SK-N-SH (cell line): ENCODE measurements at regions of chr19 and their contacts with region 1.

Region 1: GRCh38 chr19:41310033-41310758 is at the start of gene CCDC97:
- DNase-seq: peak; percentile 94
- H3K4me3 ChIP-seq: peak within 1 kb of the TSS; percentile 69 to 80
- H3K27ac ChIP-seq: peak within 1 kb of the TSS; percentile 95
- H3K4me1 ChIP-seq: peaks cover 14 to 19% of the 10 kb centered on the region in 2 experiments; a peak in 3 of 4 replicates
- H3K27me3 ChIP-seq: no peaks in the 10 kb centered on the region
- CTCF ChIP-seq: no peak
- EP300 ChIP-seq: peak in 1 of 2 experiments; percentile 49; a peak in 1 of 4 replicates
- RAD21 ChIP-seq: no peak
- polyA plus RNA-seq, gene CCDC97: 8.7 and 9.6 TPM in 2 replicates

Region 2: GRCh38 chr19:41263850-41264580 is 46.2 kb before region 1 on chr19 and contains the start of gene HNRNPUL1:
- CTCF ChIA-PET with region 1: interaction called, 18 read pairs
- POLR2A ChIA-PET with region 1: interaction called, 6 read pairs
- DNase-seq: peak; percentile 98
- H3K4me3 ChIP-seq: peak within 1 kb of the TSS; percentile 83 to 86
- H3K27ac ChIP-seq: peak within 1 kb of the TSS; percentile 95 to 96
- H3K4me1 ChIP-seq: peaks cover 11 to 12% of the 10 kb centered on the region in 2 experiments; a peak in 2 of 4 replicates
- H3K27me3 ChIP-seq: no peaks in the 10 kb centered on the region
- CTCF ChIP-seq: peak; percentile 40
- EP300 ChIP-seq: peak; percentile 15 to 21; a peak in 2 of 4 replicates
- RAD21 ChIP-seq: no peak
- polyA plus RNA-seq, gene HNRNPUL1: 34.2 and 41.5 TPM in 2 replicates

Region 3: DNA sequence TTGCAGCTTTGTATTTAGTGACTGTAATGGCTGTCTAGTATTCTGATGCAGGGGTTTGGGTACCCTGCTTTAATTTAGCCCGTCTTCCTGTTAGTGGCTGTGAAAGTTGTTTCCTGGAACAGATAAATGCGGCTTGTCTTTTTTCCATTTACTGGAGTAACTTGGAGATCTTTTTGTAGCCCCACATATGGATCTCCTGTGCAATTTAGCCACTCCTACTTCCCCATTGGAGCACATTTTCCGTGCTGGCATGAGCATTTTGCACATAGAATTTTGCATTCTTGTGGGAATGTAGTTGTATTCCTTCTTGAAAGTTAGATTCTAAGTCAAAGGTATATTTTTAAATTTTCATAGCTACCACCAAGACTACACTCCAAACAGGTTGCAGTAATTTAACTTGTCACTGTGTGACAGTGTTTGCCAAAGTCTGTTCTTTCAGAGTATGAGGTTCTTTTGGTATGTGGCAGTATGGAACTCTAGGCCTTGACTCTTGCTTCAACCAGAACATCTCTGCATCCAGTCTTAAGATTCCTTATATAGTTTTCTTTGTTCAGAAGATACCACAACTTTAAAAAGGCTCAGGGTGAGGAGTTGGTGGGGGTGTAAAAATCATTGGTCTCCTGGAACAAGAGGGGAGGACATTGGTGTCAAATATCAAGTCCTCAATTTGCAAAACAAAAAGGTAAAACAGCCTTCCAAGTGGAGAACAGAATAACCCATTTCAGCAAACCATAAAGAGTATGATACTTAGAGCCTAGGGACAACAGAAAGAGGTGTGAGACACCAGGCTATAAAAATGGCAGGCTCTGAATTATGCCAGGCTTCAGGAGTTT is 21.3 kb before region 1 on chr19:
- CTCF ChIA-PET with region 1: interaction called, 105 read pairs
- POLR2A ChIA-PET with region 1: no interaction called
- DNase-seq: no peak
- H3K4me3 ChIP-seq: no peak overlapping the region
- H3K27ac ChIP-seq: no peak overlapping the region
- H3K4me1 ChIP-seq: no peaks in the 10 kb centered on the region
- H3K27me3 ChIP-seq: no peaks in the 10 kb centered on the region
- CTCF ChIP-seq: no peak
- EP300 ChIP-seq: no peak
- RAD21 ChIP-seq: no peak

Region 4: DNA sequence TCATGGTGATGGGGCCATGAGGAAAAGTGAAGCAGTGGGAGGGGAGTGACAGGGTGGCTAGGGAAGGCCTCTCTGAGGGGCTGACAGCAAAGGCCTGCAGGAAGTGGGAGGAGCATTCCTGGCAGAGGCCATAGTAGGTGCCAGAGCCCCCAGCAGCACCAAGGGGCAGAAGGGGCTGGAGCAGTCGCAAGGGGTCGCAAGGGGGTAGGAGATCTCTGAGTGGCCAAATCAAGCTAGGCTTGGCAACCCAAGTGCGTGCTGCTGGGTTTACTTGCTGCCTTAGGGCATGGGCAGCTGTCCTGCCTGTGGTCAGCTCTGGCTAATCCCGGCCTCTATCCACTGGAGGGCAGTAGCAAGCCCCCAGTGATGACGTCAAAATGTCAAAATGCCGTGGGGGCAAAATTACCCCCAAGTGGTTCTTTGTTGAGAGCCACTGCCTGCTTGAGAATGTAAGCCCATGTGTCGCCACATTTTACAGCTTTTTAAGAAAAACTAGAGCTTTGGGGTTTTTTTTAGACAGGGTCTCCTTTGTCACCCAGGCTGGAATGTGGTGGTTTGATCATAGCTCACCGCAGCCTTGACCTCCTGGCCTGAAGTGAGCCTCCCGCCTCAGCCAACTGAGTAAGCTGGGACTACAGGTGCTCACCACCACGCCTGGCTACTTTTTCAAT is 11.5 kb after region 1 on chr19:
- CTCF ChIA-PET with region 1: interaction called, 54 read pairs
- POLR2A ChIA-PET with region 1: interaction called, 5 read pairs
- DNase-seq: peak; percentile 90
- H3K4me3 ChIP-seq: no peak overlapping the region; a peak in 1 of 4 replicates
- H3K27ac ChIP-seq: peak overlapping the region; percentile 44 to 100
- H3K4me1 ChIP-seq: peaks cover 46 to 53% of the 10 kb centered on the region in 2 experiments
- H3K27me3 ChIP-seq: no peaks in the 10 kb centered on the region
- CTCF ChIP-seq: peak; percentile 80
- EP300 ChIP-seq: no peak
- RAD21 ChIP-seq: peak; percentile 53

Region 5: DNA sequence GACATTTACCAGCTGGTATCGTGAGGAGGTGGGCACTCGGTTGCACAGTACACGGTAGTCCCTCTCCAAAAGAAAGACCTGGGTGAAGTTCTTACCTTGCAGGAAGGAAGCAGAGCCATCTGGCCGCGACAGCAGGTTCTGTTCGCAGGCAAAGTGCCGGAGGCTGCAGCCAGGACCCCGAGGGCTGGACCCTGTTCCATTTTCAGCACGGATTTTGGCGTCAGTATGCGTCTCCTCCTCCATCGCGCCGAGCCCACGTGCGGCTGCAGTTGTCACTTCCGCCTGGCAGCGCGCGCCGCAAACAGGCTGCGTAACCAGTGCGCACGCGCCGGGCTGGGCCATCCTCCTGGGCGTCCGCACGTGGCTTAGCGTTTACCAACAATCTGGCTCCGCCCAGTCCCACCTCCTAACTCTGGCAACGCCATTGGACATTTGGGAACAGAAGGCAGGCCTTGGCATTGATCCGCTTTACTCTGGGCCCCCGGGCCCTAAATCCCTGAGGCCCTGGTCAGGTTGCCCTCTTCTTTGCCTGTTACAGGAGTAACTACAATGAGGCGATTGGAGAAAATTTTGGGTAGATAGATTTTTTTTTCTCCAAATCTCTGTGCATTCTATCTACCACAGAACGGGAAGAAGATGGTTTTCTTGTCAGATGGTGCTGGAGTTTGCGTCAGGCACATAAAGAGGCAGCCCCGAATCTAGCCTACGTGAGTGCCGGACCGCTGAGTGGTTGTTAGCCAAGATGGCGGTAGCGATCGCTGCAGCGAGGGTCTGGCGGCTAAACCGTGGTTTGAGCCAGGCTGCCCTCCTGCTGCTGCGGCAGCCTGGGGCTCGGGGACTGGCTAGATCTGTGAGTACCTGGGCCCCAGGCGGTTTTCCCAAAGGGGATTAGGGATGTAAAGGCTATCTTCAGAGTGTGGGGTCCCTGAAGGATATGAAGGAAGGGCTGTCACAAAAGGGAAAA is 87.2 kb after region 1 on chr19 and contains the starts of genes BCKDHA and EXOSC5:
- CTCF ChIA-PET with region 1: no interaction called
- POLR2A ChIA-PET with region 1: no interaction called
- DNase-seq: peak; percentile 97
- H3K4me3 ChIP-seq: peak within 1 kb of the TSS; percentile 79 to 93
- H3K27ac ChIP-seq: peak within 1 kb of the TSS; percentile 86 to 90
- H3K4me1 ChIP-seq: peaks cover 5 to 14% of the 10 kb centered on the region in 2 experiments; a peak in 2 of 4 replicates
- H3K27me3 ChIP-seq: no peaks in the 10 kb centered on the region
- CTCF ChIP-seq: no peak
- EP300 ChIP-seq: no peak
- RAD21 ChIP-seq: no peak
- polyA plus RNA-seq, gene BCKDHA: 16.3 and 30.9 TPM in 2 replicates
- polyA plus RNA-seq, gene EXOSC5: 71.3 and 74.1 TPM in 2 replicates